ENCODE measurements at regions of chr2 and their contacts with region 1.

Region 1: DNA sequence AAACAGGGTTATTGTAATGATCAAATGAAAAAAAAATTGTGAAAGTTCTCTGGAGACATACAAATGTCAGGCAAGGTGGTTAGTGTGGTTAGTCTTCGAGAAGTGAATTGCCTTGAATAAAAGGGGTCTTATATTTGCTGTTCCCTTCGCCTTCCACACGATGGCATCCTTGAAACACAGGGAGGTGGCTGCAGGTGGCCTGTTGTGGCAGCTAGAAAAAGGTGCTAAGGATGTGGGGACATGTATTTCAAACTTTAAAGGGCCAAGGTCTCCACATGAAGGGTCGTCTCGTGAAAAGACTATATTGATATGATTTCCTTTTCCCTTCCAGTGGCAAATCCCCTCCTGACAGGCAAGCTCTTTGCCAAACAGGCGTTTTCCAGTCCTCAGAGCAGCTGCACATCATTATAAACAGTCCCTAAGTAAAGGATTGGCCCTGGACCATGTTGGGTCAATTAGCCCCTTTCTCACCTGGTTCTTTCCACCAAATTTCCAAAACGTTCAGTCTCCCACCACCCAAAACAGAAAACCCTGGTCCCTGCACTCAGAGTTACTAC is 68.5 kb downstream of the COPS8 start:
- DNase-seq: peak; percentile 71
- ATAC-seq: peak; percentile 29
- H3K4me3 Mint-ChIP-seq: no peak overlapping the region
- H3K27ac Mint-ChIP-seq: peak overlapping the region; percentile 86
- H3K4me1 Mint-ChIP-seq: peaks cover 52% of the 10 kb centered on the region
- H3K27me3 Mint-ChIP-seq: no peaks in the 10 kb centered on the region
- CTCF ChIP-seq: peak; percentile 81

Region 2: DNA sequence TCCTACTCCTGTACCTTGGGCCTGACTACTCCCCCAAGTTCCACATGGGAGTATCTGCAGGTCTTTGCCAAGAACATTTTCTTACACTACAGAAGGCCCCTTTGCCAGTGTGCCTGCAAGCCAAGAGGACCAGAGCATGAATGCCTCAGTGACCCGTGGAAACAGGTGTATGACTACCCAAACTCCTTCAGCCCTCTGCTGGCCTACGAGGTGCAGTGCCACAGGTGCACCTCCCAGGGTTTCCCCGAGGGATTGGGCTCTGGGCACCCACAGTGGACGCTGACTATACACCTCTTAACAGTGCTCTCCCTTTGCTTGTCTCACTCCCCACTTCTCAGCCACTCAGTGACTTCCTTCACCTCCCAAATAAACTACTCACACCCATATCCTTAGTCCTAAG is 168.4 kb after region 1 on chr2:
- CTCF ChIA-PET with region 1: no interaction called
- POLR2A ChIA-PET with region 1: no interaction called
- intact Hi-C with region 1: loop called (anchors 10 kb)
- DNase-seq: peak; percentile 39
- ATAC-seq: peak; percentile 51
- H3K4me3 Mint-ChIP-seq: no peak overlapping the region
- H3K27ac Mint-ChIP-seq: no peak overlapping the region
- H3K4me1 Mint-ChIP-seq: no peaks in the 10 kb centered on the region
- H3K27me3 Mint-ChIP-seq: no peaks in the 10 kb centered on the region
- CTCF ChIP-seq: peak; percentile 36

Region 3: GRCh38 chr2:237434866-237435311 is 280.7 kb after region 1 on chr2:
- CTCF ChIA-PET with region 1: interaction called, 3 read pairs
- POLR2A ChIA-PET with region 1: no interaction called
- intact Hi-C with region 1: loop called (anchors 5 kb)
- DNase-seq: peak; percentile 94
- ATAC-seq: peak; percentile 43
- H3K4me3 Mint-ChIP-seq: peak overlapping the region; percentile 78
- H3K27ac Mint-ChIP-seq: peak overlapping the region; percentile 97
- H3K4me1 Mint-ChIP-seq: peaks cover 86% of the 10 kb centered on the region
- H3K27me3 Mint-ChIP-seq: no peaks in the 10 kb centered on the region
- CTCF ChIP-seq: no peak

Measured in activated CD8-positive, alpha-beta T cell treated with anti-CD3 and anti-CD28 coated beads for 36 hours (primary cell).